Lower leg skin (tissue), 4 donors: ENCODE measurements at regions of chr3 and their contacts with region 1.

Region 1: DNA sequence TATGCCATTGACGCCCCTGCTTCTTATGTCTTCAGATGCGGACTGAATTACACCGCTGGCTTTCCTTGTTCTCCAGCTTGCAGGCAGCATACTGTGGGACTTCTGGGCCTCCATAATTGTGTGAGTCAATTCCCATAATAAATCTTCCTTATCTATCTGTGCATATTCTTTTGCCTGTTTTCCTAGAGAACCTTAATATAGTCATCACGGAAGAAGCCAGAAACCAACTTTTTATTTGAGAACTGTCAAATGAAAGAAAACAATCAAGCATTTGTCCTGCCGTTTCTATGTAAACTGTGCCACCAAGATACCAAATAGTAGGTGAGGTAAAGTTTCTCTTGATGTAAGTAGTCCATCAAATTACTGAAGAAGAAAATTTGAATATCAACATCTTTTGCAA is 51.8 kb upstream of the B3GALNT1 start:
- DNase-seq: no peak
- H3K4me3 ChIP-seq: no peak overlapping the region
- CTCF ChIP-seq: no peak
- POLR2A ChIP-seq: no peak

Region 2: DNA sequence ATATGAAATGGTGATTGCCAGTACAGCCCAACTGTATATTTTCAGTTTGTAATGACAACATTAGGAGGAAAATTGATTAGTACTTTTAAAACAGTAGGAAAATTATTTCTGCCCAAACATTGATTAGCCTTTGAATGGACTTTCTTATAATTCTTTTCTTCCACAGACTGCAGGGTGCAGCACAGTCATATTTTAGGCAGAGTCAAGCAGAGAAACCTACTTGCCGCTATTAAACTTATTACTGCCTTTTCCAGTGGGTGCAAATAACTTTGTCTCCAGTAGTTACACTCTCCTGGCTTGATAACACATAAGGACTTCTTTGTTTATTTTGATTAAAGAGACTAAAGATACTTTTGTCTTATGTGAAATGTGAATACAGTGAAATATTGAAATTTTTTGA is 315.5 kb before region 1 on chr3:
- intact Hi-C with region 1: no loop called
- DNase-seq: no peak
- H3K4me3 ChIP-seq: no peak overlapping the region
- CTCF ChIP-seq: no peak
- POLR2A ChIP-seq: no peak

Region 3: GRCh38 chr3:161657786-161658185 is 500.9 kb after region 1 on chr3:
- intact Hi-C with region 1: loop called (anchors 5 kb)
- DNase-seq: no peak
- H3K4me3 ChIP-seq: no peak overlapping the region
- CTCF ChIP-seq: no peak
- POLR2A ChIP-seq: no peak